Right ventricle myocardium inferior (tissue), 1 donor: ENCODE measurements at regions of chr13 and their contacts with region 1.

Region 1: GRCh38 chr13:103188713-103189326 is 122.6 kb upstream of the SLC10A2 start:
- DNase-seq: no peak
- ATAC-seq: no peak

Region 2: GRCh38 chr13:103246581-103247200 is 57.9 kb after region 1 on chr13:
- intact Hi-C with region 1: no loop called
- DNase-seq: no peak
- ATAC-seq: no peak

Region 3: GRCh38 chr13:103351035-103351828 is 162.4 kb after region 1 on chr13:
- intact Hi-C with region 1: loop called (anchors 5 kb)
- DNase-seq: no peak
- ATAC-seq: peak; percentile 58

Region 4: DNA sequence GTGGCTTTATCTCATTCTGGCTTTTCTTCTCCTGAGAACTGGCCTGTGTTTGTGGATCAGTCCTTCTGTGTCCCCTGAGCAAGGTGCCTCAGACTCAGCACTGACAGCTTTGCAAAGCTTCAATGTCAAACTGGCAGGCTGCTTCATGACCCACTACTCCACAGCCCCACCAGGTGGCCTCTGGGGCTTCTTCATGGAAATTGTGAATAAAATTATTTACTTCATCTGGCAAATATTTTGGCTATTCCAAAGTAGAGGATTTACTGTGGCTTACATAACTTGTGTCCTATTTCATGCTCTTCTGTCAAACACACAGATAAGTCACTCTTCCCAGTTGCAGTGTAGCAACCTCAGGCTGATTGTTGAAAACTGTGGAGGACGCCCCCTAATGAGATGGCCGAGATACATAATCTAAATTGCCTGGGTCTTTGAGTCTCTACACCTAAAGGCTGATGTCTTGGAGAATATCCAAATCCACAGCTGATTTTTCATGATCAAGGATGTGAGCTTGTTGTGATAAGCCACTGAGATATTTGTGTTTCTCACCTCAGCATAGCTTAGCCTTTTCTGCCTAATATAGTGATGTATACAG is 599.3 kb after region 1 on chr13:
- intact Hi-C with region 1: loop called (anchors 5 kb)
- DNase-seq: no peak
- ATAC-seq: peak; percentile 59